ENCODE measurements at regions of chr17 and their contacts with region 1.

Region 1: DNA sequence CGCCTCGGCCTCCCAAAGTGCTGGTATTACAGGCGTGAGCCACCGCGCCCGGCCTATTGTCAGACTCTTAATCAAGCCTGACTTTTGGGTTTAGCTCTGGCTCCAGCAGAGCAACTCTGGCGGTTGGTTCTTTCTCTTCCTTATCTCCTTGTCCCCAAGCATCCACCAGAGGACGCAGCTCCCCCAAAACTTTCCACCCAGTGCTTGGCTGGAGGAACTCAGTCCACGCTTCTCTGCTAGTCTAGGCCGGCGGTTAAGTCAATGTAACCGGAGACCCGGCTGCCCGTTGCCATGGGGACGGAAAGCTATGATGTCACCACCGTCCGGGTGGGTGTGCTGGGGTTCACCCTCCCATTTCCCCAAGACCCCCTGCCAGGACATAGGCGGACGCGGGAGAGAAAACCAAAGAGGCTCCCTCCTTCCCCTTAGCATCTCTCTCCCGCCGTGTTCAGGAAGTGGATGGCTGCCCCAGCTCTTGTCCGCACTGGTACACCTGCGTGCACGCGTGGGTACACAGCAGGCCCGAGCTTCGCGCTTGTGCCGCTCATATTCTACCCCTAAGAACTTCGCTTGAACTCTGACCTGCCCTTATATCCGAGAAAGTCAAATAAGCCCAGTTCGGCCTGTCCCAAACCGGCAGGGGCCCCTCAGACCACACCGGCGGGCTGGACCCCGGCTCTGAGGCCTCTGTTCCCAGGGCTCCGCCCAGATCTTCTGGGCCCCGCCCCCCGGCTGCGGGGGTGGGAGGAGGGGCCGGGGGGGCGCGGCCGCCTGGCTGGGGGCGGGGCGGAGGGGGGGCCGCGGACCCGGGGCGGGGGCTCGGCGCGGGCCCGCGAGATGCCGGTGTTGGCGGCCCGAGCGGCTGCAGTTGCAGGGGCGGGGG is at the start of gene RND2:
- DNase-seq: peak; percentile 81 to 98 (median 90)

Region 2: GRCh38 chr17:42964161-42964932 is 60.3 kb before region 1 on chr17 and contains the start of gene AARSD1:
- intact Hi-C with region 1: no loop called
- DNase-seq: peak; percentile 84 to 98 (median 88)

Region 3: DNA sequence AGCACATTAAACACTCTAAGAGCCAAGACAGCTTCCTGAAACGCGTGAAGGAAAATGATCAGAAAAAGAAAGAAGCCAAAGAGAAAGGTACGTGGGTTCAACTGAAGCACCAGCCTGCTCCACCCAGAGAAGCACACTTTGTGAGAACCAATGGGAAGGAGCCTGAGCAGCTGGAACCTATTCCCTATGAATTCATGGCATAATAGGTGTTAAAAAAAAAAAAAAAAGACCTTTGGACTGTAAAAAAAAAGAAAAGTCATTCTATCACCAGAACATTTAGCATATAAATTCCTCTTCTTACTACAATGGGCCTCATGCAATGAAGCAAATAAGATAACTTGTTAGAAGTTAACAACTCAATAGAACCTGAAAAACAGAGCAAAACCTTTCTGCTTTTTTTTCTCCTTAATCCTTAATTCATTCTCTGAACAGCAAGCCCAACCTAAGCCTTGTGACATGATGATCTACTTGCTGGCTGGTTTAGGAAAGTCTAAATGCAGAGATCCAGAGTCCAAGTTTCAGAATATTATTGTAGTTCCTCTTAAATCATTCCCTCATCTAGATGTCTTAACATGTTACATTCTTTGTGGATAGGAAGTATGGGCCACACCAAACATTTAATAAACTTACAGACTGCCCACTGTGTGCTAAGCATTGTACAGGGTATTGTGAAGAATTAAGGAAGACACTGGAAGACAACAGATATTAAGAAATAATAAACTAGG is 55.1 kb after region 1 on chr17:
- intact Hi-C with region 1: no loop called
- DNase-seq: no peak

Region 4: DNA sequence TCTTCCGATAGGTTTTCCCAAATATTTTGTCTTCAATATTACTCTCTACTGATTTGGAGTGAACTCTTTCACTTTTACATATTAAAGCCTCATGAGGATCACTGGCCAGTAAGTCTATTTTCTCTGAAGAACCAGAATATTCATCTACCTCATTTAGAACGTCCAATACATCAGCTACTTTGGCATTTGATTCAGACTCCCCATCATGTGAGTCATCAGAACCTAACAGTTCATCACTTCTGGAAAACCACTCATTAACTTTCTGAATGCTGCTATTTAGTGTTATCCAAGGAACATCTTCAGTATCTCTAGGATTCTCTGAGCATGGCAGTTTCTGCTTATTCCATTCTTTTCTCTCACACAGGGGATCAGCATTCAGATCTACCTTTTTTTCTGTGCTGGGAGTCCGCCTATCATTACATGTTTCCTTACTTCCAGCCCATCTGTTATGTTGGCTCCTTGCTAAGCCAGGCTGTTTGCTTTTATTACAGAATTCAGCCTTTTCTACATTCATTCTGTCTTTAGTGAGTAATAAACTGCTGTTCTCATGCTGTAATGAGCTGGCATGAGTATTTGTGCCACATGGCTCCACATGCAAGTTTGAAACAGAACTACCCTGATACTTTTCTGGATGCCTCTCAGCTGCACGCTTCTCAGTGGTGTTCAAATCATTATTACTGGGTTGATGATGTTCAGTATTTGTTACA is 69.6 kb after region 1 on chr17:
- intact Hi-C with region 1: no loop called
- DNase-seq: peak in 1 of 10 donors; percentile 11

Region 5: GRCh38 chr17:43170766-43171585 is 146.3 kb after region 1 on chr17 and contains the start of gene NBR1:
- intact Hi-C with region 1: loop called (anchors 2 kb)
- DNase-seq: peak; percentile 92 to 99 (median 96)

Region 6: GRCh38 chr17:43330876-43331639 is 306.4 kb after region 1 on chr17:
- intact Hi-C with region 1: loop called (anchors 5 kb)
- DNase-seq: no peak